A673 (cell line): ENCODE measurements at regions of chr2 and their contacts with region 1.

Region 1: DNA sequence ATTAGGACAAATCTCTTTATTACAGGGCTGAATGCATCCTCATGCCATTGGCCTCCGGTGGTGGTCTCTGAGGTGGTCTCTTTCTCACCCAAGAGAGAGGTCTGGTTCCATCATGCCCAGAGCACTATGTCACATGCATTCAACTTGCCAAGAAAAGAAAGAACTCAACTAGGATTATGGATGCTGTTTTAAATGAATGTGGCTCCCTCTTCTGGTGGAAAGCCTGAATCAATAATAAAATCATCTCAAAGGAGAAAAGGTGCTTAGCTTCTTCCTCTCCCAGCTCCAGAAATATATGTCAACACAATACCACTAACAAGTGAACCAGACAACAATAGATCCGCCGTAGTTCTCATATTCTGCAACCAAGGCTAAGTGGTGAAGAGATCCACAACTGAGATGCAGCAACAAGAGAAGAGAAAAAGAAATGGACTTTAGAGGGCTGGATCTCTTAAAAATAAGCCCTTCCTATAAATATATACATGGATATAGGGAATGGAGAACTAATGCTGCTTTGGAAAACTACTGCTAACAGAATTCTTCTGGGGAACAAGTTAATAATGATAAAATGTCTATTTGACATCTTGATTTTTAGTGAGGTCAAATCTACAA is 396.8 kb downstream of the NCKAP5 start:
- DNase-seq: peak; percentile 89
- H3K4me3 ChIP-seq: no peak overlapping the region
- H3K27ac ChIP-seq: no peak overlapping the region
- H3K4me1 ChIP-seq: peaks cover 60% of the 10 kb centered on the region
- H3K27me3 ChIP-seq: no peaks in the 10 kb centered on the region
- CTCF ChIP-seq: peak; percentile 83

Region 2: GRCh38 chr2:132547074-132547687 is 624.3 kb before region 1 on chr2:
- CTCF ChIA-PET with region 1: interaction called, 10 read pairs
- POLR2A ChIA-PET with region 1: no interaction called
- intact Hi-C with region 1: loop called (anchors 1 kb)
- DNase-seq: peak; percentile 88
- H3K4me3 ChIP-seq: no peak overlapping the region
- H3K27ac ChIP-seq: no peak overlapping the region
- H3K4me1 ChIP-seq: peaks cover 14% of the 10 kb centered on the region
- H3K27me3 ChIP-seq: no peaks in the 10 kb centered on the region
- CTCF ChIP-seq: peak; percentile 82

Region 3: GRCh38 chr2:132651115-132652045 is 520.1 kb before region 1 on chr2:
- CTCF ChIA-PET with region 1: no interaction called
- POLR2A ChIA-PET with region 1: no interaction called
- intact Hi-C with region 1: loop called (anchors 5 kb)
- DNase-seq: peak; percentile 45
- H3K4me3 ChIP-seq: no peak overlapping the region
- H3K27ac ChIP-seq: no peak overlapping the region
- H3K4me1 ChIP-seq: peaks cover 16% of the 10 kb centered on the region
- H3K27me3 ChIP-seq: peaks cover 4% of the 10 kb centered on the region
- CTCF ChIP-seq: peak; percentile 57

Region 4: DNA sequence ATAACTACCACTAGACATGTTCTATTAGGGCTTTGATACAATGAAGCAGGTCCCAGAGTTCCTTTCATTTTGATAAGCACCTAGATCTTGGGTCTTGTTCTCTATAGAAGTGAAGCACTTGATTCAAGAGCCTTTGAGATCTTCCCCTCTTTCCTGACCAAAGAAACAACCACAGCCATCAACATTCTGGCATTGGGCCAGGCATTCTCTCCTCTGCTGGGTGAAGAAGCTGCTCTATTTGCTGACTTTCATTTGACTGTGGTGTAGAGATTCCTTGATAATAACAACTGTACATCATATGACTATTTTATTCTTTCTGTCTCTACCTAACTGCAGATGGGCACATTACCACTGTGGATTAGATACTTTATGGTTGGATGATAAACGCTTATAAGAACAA is 404.9 kb before region 1 on chr2:
- CTCF ChIA-PET with region 1: no interaction called
- POLR2A ChIA-PET with region 1: no interaction called
- intact Hi-C with region 1: no loop called
- DNase-seq: no peak
- H3K4me3 ChIP-seq: no peak overlapping the region
- H3K27ac ChIP-seq: no peak overlapping the region
- H3K4me1 ChIP-seq: no peaks in the 10 kb centered on the region
- H3K27me3 ChIP-seq: no peaks in the 10 kb centered on the region
- CTCF ChIP-seq: no peak

Region 5: GRCh38 chr2:132936791-132937190 is 234.7 kb before region 1 on chr2:
- CTCF ChIA-PET with region 1: no interaction called
- POLR2A ChIA-PET with region 1: no interaction called
- intact Hi-C with region 1: loop called (anchors 10 kb)
- DNase-seq: no peak
- H3K4me3 ChIP-seq: no peak overlapping the region
- H3K27ac ChIP-seq: peak overlapping the region; percentile 1
- H3K4me1 ChIP-seq: peaks cover 32% of the 10 kb centered on the region
- H3K27me3 ChIP-seq: no peaks in the 10 kb centered on the region
- CTCF ChIP-seq: no peak